Activated CD4-positive, alpha-beta T cell treated with anti-CD3 and anti-CD28 coated beads, Interleukin-2, amount 10 ng/mL, durations not matched to agents 24 days and 14 days (primary cell): ENCODE measurements at regions of chr19 and their contacts with region 1.

Region 1: DNA sequence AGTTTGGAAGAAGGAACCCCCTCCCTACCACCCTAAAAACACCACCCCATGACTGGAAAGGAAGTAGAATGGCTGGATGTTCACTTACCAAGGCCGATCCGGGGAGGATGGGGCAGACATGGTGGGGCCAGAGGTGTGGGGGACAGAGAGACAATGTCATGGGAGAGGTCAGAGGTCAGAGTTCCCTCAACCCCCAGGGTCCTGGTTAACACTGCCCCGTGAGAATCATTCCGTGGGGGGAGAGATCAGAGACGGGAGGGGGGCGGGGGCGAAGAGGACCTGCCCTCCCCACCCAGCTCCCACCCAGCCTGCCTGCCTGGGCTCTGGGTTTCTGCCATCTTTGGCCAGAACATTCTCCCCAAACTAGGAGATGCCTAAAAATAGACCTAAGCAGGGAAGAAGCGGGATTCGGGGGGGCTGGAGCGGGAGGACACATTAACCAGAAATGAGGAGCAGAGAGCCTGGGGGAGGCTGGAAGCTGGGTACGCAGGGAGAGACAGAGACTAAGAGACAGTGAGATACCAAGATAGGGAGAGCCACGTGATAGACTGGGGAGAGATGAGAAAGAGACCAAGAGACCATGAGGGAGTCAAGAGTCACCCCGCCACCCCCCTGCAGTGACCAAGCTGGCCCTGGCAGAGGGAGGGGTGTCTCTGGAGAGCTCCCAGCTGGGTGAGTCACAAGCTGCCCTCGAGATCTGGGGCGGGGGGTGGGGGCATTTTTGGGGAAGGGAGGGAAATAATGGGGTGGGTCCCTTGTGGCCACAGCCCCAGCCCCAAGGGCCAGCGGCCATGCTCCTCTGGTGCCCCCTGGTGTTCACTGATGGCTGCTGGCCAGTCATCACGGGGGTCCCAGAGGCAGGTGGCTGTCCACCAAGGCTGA is 6.1 kb upstream of the KANK2 start:
- DNase-seq: peak; percentile 79
- H3K4me3 Mint-ChIP-seq: no peak overlapping the region
- H3K27ac Mint-ChIP-seq: no peak overlapping the region
- H3K4me1 Mint-ChIP-seq: peaks cover 2% of the 10 kb centered on the region
- H3K27me3 Mint-ChIP-seq: peaks cover 16% of the 10 kb centered on the region

Region 2: DNA sequence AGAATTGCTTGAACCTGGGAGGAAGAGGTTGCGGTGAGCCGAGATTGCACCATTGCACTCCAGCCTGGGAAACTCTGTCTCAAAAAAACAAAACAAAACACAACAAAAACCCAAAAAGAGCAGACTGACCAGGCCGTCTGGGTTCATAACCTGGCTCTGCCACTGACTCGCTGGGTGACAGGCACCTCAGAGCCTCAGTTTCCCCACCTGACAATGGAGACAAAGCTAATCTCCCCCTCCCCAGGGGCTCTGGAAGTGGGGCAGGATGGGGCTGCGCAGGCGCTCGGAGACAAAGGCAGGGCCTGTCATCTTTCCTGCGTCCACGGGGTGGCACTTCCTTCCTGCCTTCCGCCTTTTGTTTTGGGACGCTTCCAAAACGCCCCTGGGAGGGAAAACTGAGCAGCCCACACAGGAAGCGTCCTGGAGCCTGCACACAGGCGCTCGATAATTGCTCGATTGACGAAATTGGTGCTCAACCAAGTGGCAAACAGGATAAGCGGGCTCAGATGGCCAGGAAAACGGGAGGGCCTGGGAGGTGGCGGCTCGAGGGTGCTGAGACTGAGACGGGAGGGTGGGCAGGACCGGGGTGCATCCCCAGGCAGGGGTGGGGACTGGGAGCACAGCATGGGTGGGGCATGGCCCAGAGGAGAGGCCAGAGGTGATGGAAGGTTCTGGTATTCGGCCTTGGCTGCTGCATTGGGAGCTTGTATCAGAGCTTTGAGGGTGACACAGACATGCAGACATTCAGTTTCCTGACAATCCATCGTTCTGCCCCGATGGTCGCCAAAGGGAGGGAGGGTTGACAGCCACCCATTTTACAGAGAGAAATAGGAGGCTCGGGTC is 65.7 kb before region 1 on chr19:
- intact Hi-C with region 1: loop called (anchors 2 kb)
- DNase-seq: peak; percentile 84
- H3K4me3 Mint-ChIP-seq: peak overlapping the region; percentile 86
- H3K27ac Mint-ChIP-seq: peak overlapping the region; percentile 81
- H3K4me1 Mint-ChIP-seq: peaks cover 9% of the 10 kb centered on the region
- H3K27me3 Mint-ChIP-seq: no peaks in the 10 kb centered on the region

Region 3: DNA sequence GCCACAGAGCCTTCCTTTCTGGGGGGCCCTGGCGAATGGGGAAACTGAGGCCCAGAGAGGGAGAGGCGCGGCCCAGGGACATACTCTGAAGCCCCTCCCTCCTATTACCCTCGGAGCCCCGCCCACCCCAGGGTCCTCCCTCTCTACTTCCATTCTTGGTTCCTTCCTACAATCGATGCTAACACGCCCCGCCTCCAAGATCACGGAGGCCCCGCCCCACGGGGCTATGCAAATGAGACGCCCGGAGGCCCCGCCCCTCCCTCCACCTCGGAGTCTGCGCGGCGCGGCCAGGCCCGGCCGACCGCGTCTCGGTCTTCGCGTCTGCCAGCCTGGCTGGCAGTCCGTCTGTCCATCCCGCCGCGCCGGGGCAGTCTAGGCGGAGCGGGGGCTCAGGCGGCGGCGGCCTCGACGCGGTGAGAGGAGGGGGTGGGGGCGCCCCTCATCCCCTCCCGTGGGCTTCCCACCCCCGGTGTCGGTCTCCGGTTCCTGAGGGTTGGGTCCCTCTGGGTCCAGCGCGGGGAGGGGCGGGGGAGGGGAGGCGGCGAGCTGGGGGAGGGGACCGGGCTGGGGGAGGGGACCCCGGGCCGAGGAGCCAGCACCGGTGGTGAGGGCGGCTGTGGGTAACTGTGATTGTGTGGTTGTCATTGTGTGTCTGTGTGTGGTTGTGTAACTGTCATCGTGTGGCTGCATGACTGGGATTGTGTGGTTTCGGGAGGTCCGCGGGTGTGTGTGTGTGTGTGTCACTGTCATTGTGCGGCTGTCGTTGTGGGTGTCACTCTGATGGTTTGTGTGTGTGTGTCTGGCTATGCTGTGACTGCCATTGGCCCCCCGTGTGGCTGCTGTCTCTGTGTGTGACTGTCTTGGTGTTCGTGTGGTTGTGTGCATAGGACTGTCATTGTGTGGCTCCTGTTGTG is 152.0 kb after region 1 on chr19 and contains the start of gene PLPPR2:
- intact Hi-C with region 1: no loop called
- DNase-seq: peak; percentile 96
- H3K4me3 Mint-ChIP-seq: peak within 1 kb of the TSS; percentile 68
- H3K27ac Mint-ChIP-seq: no peak within 1 kb of the TSS
- H3K4me1 Mint-ChIP-seq: peaks cover 8% of the 10 kb centered on the region
- H3K27me3 Mint-ChIP-seq: peaks cover 11% of the 10 kb centered on the region
- total RNA-seq, gene PLPPR2: 2.3 TPM in 2 replicates